Prostate gland (tissue), 2 donors: ENCODE measurements at regions of chr1 and their contacts with region 1.

Region 1: GRCh38 chr1:17494114-17494729 is 45.3 kb upstream of the ARHGEF10L start:
- DNase-seq: peak; percentile 30
- H3K4me3 ChIP-seq: no peak overlapping the region
- H3K27ac ChIP-seq: no peak overlapping the region
- H3K4me1 ChIP-seq: no peaks in the 10 kb centered on the region
- H3K27me3 ChIP-seq: no peaks in the 10 kb centered on the region
- CTCF ChIP-seq: peak; percentile 73 to 86 (median 76)
- POLR2A ChIP-seq: no peak

Region 2: DNA sequence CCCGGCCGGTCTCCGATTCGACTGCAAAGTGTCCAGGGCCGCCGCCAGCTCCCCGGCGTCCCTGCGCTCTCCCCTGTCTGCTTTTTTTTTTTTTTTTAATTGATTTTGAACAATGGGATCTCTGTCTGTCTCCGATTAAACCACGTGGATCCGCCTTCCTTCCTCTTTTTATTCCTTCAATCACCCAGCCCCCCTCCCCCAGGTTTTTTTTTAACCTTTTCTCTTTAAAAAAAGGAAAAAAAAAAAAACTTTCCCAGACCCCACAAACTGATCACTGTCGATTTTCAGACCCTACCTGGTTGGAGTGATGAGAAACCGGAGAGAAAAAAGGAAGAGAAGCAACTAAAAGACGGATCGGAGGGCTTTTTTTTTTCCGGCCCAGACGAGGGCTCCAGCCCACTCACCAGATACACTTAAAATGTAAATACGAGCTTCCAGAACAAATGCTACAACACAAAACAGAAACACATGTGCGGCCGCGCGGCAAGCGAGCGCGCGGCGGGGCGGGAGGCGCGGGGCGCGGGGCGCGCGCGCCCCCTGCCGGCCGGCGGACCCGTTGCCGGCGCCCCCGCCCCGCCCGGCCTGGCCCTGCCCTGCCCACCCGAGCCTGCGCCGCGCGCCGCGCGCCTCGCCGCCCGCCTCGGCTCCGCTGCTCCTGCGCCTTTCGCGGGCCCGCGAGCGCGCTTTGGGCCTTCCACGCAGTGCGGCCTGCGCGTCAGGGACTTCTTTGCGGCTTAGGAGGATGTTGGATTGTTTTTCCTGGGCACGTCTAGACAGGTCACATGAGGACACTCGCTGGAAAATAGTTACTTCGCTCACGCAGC is 54.8 kb before region 1 on chr1 and contains the start of gene RCC2:
- intact Hi-C with region 1: no loop called
- DNase-seq: peak; percentile 37
- H3K4me3 ChIP-seq: peak within 1 kb of the TSS; percentile 63 to 68
- H3K27ac ChIP-seq: peak within 1 kb of the TSS; percentile 75 to 81
- H3K4me1 ChIP-seq: no peaks in the 10 kb centered on the region
- H3K27me3 ChIP-seq: no peaks in the 10 kb centered on the region
- CTCF ChIP-seq: peak in 1 of 4 experiments; percentile 26
- POLR2A ChIP-seq: no peak
- total RNA-seq, gene RCC2: 42.6 to 65.4 TPM

Region 3: DNA sequence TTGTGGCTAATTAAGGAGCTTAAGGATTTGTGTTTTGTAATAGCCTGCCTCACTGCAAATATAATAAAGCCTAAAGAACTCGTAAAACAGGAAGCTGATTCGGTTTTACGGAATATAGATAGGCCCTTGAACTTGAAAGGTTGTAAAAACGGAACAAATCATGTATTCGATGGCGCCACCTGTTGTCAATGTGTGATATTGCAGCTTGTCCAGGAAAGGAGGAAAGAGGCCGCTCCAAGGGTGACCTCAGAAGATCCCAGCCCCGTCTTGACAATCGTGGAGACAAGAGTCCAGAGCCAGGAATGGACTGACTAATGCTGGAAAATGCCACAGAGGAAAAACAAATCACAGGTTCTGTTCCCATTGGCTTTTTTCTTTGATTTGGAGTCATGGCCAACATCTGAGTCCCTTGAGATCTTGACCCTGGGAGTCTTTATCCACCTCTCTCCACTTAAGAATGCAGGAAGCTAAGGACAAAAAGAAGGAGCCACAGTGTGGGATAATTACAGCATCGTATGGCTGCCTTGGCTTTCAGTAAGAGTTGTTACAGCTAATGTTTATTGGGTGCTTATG is 606.4 kb after region 1 on chr1:
- intact Hi-C with region 1: loop called (anchors 10 kb)
- DNase-seq: peak; percentile 42
- H3K4me3 ChIP-seq: no peak overlapping the region
- H3K27ac ChIP-seq: no peak overlapping the region
- H3K4me1 ChIP-seq: no peaks in the 10 kb centered on the region
- H3K27me3 ChIP-seq: peaks cover 7% of the 10 kb centered on the region
- CTCF ChIP-seq: peak; percentile 26 to 84 (median 82)
- POLR2A ChIP-seq: no peak

Region 4: GRCh38 chr1:18575620-18576019 is 1081.4 kb after region 1 on chr1:
- intact Hi-C with region 1: loop called (anchors 10 kb)
- DNase-seq: peak; percentile 28
- H3K4me3 ChIP-seq: no peak overlapping the region
- H3K27ac ChIP-seq: no peak overlapping the region
- H3K4me1 ChIP-seq: no peaks in the 10 kb centered on the region
- H3K27me3 ChIP-seq: peaks cover 2% of the 10 kb centered on the region
- CTCF ChIP-seq: peak; percentile 31 to 67 (median 56)
- POLR2A ChIP-seq: no peak